ENCODE measurements at regions of chr4 and their contacts with region 1.

Region 1: GRCh38 chr4:125314676-125315575 is at the start of gene FAT4:
- DNase-seq: peak; percentile 96
- H3K4me3 ChIP-seq: peak within 1 kb of the TSS; percentile 85
- H3K27ac ChIP-seq: peak within 1 kb of the TSS; percentile 84
- H3K4me1 ChIP-seq: peaks cover 23% of the 10 kb centered on the region
- H3K27me3 ChIP-seq: no peaks in the 10 kb centered on the region
- CTCF ChIP-seq: 0 out of 2 replicates have a peak, but pooled peaks have one; percentile 14
- total RNA-seq, gene FAT4: 31.3 and 33.6 TPM in 2 replicates

Region 2: GRCh38 chr4:124157396-124158083 is 1157.4 kb before region 1 on chr4:
- CTCF ChIA-PET with region 1: no interaction called
- POLR2A ChIA-PET with region 1: no interaction called
- intact Hi-C with region 1: no loop called
- DNase-seq: no peak
- H3K4me3 ChIP-seq: no peak overlapping the region
- H3K27ac ChIP-seq: no peak overlapping the region
- H3K4me1 ChIP-seq: no peaks in the 10 kb centered on the region
- H3K27me3 ChIP-seq: no peaks in the 10 kb centered on the region
- CTCF ChIP-seq: no peak

Region 3: DNA sequence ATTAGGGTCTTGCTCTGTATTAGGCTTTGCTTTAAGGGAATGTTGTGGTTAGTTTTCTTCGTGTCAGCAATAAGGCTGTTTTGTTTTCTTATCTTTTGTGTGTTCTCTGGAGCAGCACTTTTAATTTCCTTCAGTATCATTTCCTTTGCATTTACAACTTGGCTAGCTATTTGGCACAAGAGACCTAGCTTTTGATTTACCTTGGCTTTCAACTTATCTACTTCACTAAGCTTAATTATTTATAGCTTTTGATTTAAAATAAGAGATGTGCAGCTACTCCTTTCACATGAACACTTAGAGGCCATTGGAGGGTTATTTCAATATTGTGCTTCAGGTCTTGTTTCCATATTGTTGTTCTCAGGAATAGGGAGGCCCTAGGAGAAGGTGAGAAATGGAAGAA is 68.1 kb after region 1 on chr4:
- CTCF ChIA-PET with region 1: no interaction called
- POLR2A ChIA-PET with region 1: no interaction called
- intact Hi-C with region 1: no loop called
- DNase-seq: no peak
- H3K4me3 ChIP-seq: no peak overlapping the region
- H3K27ac ChIP-seq: no peak overlapping the region
- H3K4me1 ChIP-seq: peaks cover 5% of the 10 kb centered on the region
- H3K27me3 ChIP-seq: no peaks in the 10 kb centered on the region
- CTCF ChIP-seq: no peak

Region 4: DNA sequence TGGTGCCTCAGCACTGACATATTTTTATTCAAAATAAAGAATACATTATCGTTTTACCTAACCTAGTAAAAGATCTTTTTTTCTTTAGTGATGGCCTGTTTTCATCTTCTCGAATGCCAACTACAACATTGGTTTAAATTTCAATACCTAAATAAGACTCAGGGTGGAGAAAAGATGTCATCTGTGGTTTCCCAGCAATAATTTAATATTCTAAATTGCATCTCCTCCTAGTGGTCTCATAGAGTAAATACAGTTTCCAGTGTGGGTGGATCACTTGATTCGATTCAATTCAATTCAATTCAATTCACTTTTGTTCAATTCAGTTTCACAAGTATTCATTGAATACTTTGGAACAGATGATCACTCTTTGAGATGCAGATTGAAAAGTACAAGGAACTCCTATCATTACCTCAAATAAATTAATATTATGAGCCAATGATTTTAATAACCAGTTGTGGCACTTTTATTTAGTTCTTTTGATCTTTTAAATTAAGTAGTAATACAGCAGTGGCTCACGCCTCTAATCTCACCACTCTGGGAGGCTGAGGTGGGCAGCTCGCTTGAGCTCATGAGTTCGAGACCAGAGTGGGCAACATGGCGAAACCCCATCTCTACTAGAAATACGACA is 427.0 kb after region 1 on chr4:
- CTCF ChIA-PET with region 1: no interaction called
- POLR2A ChIA-PET with region 1: no interaction called
- intact Hi-C with region 1: loop called (anchors 5 kb)
- DNase-seq: peak; percentile 65
- H3K4me3 ChIP-seq: no peak overlapping the region
- H3K27ac ChIP-seq: no peak overlapping the region
- H3K4me1 ChIP-seq: no peaks in the 10 kb centered on the region
- H3K27me3 ChIP-seq: no peaks in the 10 kb centered on the region
- CTCF ChIP-seq: peak; percentile 69

Region 5: GRCh38 chr4:125801373-125801772 is 486.4 kb after region 1 on chr4:
- CTCF ChIA-PET with region 1: no interaction called
- POLR2A ChIA-PET with region 1: no interaction called
- intact Hi-C with region 1: no loop called
- DNase-seq: no peak
- H3K4me3 ChIP-seq: no peak overlapping the region
- H3K27ac ChIP-seq: no peak overlapping the region
- H3K4me1 ChIP-seq: no peaks in the 10 kb centered on the region
- H3K27me3 ChIP-seq: no peaks in the 10 kb centered on the region
- CTCF ChIP-seq: no peak

Region 6: DNA sequence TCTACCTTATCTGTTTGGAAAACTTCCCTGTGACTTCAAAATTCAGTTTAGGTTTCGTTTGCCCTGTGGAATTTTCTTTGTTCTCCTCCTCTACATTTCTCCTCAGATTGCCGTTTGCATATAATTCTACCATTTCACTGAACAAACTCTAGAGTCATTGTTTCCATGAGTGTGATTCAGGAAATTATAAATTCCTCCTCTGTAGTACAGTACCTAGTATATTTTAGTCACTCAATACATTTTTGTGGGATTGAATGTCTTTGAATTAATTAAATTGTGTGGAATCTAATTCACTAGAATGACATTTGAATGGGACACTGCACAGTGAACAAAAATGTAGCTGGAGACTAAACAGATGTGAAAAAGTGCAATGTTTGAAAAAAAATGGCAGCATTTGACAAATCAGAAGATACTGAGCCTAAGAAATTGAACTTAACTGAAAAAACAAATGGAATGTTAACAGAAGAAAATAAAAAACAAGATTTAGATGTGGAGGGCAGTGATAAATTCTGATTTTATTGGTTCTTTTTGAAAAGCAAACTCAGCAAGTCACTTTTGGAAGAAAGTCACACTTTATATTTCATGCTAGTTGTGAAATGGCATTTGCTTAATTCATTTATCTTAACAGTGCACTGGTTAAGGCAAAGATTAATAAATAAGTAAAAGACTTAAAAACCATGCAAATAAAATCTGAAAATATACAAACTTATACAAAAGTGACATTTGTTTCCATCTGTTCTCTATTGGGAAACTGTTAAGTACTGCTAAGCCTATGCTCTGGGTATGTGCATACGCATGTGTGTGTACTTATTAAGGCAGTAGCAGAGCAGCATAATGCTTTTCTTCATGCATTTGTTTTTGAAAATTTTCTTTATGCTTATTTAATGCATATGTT is 512.1 kb after region 1 on chr4:
- CTCF ChIA-PET with region 1: no interaction called
- POLR2A ChIA-PET with region 1: no interaction called
- intact Hi-C with region 1: loop called (anchors 5 kb)
- DNase-seq: peak; percentile 63
- H3K4me3 ChIP-seq: no peak overlapping the region
- H3K27ac ChIP-seq: peak overlapping the region; percentile 85
- H3K4me1 ChIP-seq: peaks cover 25% of the 10 kb centered on the region
- H3K27me3 ChIP-seq: no peaks in the 10 kb centered on the region
- CTCF ChIP-seq: no peak

Region 7: DNA sequence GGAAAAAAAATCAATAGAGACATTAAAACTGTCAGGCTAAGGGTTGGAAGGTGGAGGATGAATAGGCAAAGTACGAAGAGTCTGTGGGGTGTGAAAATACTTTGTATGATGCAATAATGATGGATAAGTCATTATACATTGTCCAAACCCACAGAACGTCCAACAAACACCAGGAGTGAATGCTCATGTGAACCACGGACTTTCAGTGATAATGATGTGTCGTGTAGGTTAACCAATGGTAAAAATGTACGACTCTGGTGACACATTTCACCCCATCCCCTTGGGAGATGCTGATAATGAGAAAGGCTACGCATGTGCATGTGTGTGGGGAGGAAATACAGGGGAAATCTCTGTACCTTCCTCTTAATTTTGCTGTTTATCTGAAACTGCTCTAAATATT is 665.0 kb after region 1 on chr4:
- CTCF ChIA-PET with region 1: interaction called, 6 read pairs
- POLR2A ChIA-PET with region 1: no interaction called
- intact Hi-C with region 1: loop called (anchors 5 kb)
- DNase-seq: no peak
- H3K4me3 ChIP-seq: no peak overlapping the region
- H3K27ac ChIP-seq: no peak overlapping the region
- H3K4me1 ChIP-seq: peaks cover 17% of the 10 kb centered on the region
- H3K27me3 ChIP-seq: no peaks in the 10 kb centered on the region
- CTCF ChIP-seq: no peak

Region 8: DNA sequence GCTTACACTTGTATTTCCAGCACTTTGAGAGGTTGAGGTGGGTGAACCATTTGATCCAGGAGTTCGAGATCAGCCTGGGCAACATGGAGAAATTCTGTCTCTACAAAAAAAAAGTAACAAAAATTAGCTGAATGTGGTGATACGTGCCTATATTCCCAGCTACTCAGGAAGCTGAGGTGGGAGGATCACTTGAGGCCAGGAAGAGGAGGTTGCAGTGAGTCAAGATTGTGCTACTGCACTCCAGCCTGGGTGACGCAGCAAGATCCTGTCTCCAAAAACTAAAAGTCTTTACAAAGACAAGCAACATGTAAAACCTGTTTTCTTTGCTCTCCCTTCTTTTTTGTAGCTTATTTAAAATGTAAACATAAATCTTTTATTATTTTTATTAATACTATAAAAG is 1155.9 kb after region 1 on chr4:
- CTCF ChIA-PET with region 1: no interaction called
- POLR2A ChIA-PET with region 1: interaction called, 22 read pairs
- intact Hi-C with region 1: loop called (anchors 2 kb)
- DNase-seq: peak; percentile 69
- H3K4me3 ChIP-seq: no peak overlapping the region
- H3K27ac ChIP-seq: peak overlapping the region; percentile 99
- H3K4me1 ChIP-seq: peaks cover 32% of the 10 kb centered on the region
- H3K27me3 ChIP-seq: no peaks in the 10 kb centered on the region
- CTCF ChIP-seq: no peak

Region 9: DNA sequence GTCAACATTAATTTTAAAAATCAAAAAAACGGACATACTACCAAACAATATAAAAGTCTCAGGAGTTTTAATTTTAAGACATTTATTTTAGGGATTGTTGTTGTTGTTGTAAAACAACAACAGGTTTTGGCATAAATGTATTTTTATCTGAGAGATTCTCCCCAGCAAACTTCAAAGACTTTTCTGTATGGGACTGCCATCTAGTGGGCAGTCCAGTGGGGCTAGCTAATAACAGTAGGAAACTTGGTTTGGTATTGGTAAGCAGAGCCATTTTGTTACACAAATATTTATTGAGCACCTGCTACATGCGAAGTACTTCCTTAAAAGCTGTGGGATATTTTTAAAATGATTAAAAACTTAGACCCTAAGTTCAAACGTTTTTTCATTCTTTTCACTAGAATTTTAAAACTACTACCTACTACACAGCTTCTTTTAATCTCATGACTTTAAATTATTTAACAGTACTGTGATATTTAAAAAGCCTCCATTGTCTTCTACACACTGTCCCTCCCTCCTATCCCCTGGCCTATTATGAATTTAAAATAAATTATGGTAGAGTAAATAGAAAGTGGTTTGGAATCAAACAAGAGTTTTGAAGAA is 1289.4 kb after region 1 on chr4:
- CTCF ChIA-PET with region 1: no interaction called
- POLR2A ChIA-PET with region 1: no interaction called
- intact Hi-C with region 1: loop called (anchors 1 kb)
- DNase-seq: peak; percentile 88
- H3K4me3 ChIP-seq: no peak overlapping the region
- H3K27ac ChIP-seq: peak overlapping the region; percentile 78
- H3K4me1 ChIP-seq: peaks cover 43% of the 10 kb centered on the region
- H3K27me3 ChIP-seq: no peaks in the 10 kb centered on the region
- CTCF ChIP-seq: peak; percentile 85

Region 10: DNA sequence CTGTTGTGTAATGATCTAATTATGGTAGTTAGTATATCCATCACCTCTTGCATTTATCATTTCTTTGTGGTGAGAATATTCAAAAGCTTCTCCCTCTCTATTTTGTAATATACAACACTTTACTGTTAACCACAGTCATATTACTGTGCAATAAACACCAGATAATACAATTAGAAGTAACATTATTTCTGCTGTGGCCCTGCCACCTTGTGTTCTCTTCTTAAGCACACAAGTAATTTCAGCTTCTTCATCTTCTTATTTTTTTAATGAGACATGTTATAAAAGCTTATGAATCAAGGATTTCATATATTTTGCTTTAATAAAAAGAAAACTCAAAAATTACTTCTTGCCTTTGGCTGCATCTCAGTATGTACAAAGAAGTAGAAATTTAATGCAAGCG is 1642.6 kb after region 1 on chr4:
- CTCF ChIA-PET with region 1: no interaction called
- POLR2A ChIA-PET with region 1: no interaction called
- intact Hi-C with region 1: loop called (anchors 5 kb)
- DNase-seq: peak; percentile 34
- H3K4me3 ChIP-seq: no peak overlapping the region
- H3K27ac ChIP-seq: peak overlapping the region; percentile 1
- H3K4me1 ChIP-seq: peaks cover 24% of the 10 kb centered on the region
- H3K27me3 ChIP-seq: no peaks in the 10 kb centered on the region
- CTCF ChIP-seq: peak; percentile 43; the same call in 1 of the 2 replicates

Measured in A673 (cell line).